Right ventricle myocardium inferior (tissue), 1 donor: ENCODE measurements at regions of chr17 and their contacts with region 1.

Region 1: DNA sequence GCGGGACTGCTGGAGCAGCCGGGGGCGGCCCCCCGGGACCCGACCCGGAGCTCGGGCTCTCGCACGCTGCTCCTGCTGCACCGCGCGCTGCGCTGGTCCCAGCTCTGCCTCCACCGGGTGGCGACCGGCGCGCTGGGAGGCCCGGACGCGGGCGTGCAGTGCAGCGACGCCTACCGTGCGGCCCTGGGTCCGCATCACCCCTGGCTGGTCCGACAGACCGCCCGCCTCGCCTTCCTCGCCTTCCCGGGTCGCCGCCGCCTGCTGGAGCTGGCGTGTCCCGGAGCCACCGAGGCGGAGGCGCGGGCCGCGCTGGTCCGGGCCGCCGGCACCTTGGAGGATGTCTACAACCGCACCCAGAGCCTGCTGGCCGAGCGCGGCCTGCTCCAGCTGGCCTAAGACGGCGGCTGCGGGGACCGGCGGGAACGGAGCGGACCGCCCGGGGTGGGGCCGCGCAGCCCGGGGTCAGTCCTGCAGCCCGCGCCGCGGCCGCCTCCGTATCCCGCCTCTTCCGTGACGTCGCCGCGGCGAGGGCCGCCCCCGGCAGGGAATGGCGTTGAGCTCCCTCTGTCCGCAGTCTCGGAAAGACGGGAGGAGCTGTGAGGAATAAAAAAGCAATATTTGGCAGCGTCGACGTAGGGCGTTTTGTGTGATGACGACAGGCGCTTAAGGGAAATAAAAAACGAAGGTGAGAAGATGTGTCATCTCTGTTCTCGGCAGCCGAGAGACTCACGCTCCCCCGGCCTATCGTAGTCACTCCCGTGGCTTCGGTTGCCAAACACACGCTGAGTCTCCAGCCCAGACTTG is 1.3 kb downstream of the GLTPD2 start:
- DNase-seq: peak; percentile 94
- ATAC-seq: peak; percentile 95

Region 2: DNA sequence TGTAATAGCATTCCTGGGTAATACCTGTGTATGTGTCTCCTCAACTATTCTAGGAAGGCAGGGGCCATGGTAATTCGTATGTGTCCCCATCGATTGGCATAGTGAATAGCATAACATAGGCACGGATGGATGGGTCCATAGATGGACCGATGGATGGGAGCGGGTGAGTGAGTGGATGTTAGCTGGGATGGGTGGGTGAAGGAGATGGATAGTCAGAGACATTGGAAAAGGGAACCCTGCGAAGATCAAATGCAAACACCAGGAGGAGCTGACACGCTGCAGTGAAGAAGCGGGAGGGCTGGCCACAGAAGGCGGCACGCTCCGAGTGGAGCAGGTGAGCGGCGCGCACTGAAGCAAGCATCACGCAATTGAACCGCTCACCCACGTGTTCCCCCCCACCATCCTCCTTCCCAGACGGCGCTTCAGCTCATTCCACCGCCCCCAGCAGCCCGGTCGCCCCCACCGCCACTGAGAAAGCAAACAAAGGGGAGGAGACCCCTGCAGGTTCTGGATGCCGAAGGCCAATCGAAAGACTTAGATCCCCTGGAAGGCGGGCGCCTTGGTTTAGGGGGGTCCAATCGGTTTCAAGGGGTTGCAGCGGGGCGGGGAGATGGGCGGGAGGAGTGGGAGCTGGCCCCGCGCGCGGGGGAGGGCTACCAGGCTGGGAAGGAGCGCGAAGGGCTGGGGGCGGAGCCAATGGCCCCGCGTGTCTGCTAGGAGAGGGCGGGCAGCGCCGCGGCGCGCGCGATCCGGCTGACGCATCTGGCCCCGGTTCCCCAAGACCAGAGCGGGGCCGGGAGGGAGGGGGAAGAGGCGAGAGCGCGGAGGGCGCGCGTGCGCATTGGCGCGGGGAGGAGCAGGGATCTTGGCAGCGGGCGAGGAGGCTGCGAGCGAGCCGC is 80.1 kb before region 1 on chr17 and contains the start of gene ARRB2:
- intact Hi-C with region 1: loop called (anchors 1 kb)
- DNase-seq: peak; percentile 100
- ATAC-seq: peak; percentile 97
- total RNA-seq, gene ARRB2: 28.3 TPM

Region 3: DNA sequence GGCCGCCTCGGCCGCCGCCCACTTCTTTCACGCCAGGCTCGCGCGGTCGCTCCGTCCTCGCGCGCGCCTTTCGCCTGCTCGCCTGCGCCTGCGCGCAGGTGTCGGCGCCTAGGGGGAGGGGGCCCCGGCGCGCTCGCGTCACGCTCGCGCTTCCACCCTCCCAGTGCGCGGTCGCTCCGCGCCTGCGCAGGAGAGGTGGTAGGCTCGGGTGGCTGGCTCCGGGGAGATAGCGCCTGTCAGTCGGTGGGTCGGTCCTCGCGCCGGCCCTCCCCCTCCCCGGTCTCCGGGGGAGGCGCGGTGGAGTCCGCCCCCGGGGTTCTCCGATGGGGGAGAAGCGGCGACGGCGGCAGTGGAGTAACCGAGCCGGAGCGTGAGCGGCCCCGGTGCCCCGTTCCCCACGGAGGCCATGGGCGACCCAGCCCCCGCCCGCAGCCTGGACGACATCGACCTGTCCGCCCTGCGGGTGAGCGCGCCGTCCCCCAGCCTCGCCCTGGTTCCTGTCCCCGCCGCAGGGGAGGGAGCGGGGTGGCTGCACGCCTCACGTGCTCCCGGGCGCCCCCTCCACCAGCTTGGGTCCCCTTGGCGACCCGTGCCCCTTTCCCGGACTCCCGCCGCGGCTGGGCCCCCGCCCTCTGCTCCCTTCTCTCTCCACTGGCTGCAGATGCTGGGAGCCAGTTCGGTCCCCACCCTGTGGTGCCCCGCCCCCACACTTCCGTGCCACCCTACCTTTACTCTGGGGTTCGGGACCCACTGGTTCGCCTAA is 43.3 kb after region 1 on chr17 and contains the start of gene MINK1:
- intact Hi-C with region 1: loop called (anchors 5 kb)
- DNase-seq: peak; percentile 95
- ATAC-seq: peak; percentile 97
- total RNA-seq, gene MINK1: 50.7 TPM

Region 4: GRCh38 chr17:4891411-4892342 is 101.6 kb after region 1 on chr17:
- intact Hi-C with region 1: loop called (anchors 2 kb)
- DNase-seq: no peak
- ATAC-seq: no peak